ENCODE measurements at regions of chr4 and their contacts with region 1.

Region 1: GRCh38 chr4:37977471-37978247 is 17.5 kb downstream of the PTTG2 start:
- DNase-seq: peak; percentile 84
- H3K4me3 ChIP-seq: peak overlapping the region; percentile 53 to 93 (median 80)
- H3K27ac ChIP-seq: peak overlapping the region; percentile 94 to 98 (median 96)
- H3K4me1 ChIP-seq: peaks cover 4 to 51% (median 41%) of the 10 kb centered on the region in 4 donors
- H3K27me3 ChIP-seq: no peaks in the 10 kb centered on the region
- CTCF ChIP-seq: peak; percentile 64 to 78 (median 67)
- EP300 ChIP-seq: no peak
- POLR2A ChIP-seq: peak; percentile 28

Region 2: GRCh38 chr4:38023347-38024205 is 45.9 kb after region 1 on chr4:
- in situ Hi-C with region 1: no loop called
- intact Hi-C with region 1: loop called (anchors 10 kb)
- DNase-seq: no peak
- H3K4me3 ChIP-seq: no peak overlapping the region
- H3K27ac ChIP-seq: peak overlapping the region; percentile 61 to 76 (median 68)
- H3K4me1 ChIP-seq: peaks cover 0 to 22% (median 0%) of the 10 kb centered on the region in 4 donors
- H3K27me3 ChIP-seq: no peaks in the 10 kb centered on the region
- CTCF ChIP-seq: no peak
- EP300 ChIP-seq: peak; percentile 55
- POLR2A ChIP-seq: no peak